ENCODE measurements at regions of chr2 and their contacts with region 1.

Region 1: GRCh38 chr2:136212423-136213378 is 94.8 kb upstream of the CXCR4 start:
- DNase-seq: peak in 2 of 3 donors; percentile 41 to 42
- H3K4me3 ChIP-seq: no peak overlapping the region
- H3K4me3 Mint-ChIP-seq: no peak overlapping the region
- H3K27ac ChIP-seq: peak overlapping the region in 1 of 2 donors; percentile 96
- H3K27ac Mint-ChIP-seq: peak overlapping the region; percentile 93 to 99 (median 97)
- H3K4me1 ChIP-seq: peaks cover 72 to 91% of the 10 kb centered on the region in 2 donors
- H3K4me1 Mint-ChIP-seq: peaks cover 94% of the 10 kb centered on the region
- H3K27me3 ChIP-seq: no peaks in the 10 kb centered on the region
- H3K27me3 Mint-ChIP-seq: peaks cover 0 to 1% (median 0%) of the 10 kb centered on the region in 3 donors
- CTCF ChIP-seq: no peak

Region 2: DNA sequence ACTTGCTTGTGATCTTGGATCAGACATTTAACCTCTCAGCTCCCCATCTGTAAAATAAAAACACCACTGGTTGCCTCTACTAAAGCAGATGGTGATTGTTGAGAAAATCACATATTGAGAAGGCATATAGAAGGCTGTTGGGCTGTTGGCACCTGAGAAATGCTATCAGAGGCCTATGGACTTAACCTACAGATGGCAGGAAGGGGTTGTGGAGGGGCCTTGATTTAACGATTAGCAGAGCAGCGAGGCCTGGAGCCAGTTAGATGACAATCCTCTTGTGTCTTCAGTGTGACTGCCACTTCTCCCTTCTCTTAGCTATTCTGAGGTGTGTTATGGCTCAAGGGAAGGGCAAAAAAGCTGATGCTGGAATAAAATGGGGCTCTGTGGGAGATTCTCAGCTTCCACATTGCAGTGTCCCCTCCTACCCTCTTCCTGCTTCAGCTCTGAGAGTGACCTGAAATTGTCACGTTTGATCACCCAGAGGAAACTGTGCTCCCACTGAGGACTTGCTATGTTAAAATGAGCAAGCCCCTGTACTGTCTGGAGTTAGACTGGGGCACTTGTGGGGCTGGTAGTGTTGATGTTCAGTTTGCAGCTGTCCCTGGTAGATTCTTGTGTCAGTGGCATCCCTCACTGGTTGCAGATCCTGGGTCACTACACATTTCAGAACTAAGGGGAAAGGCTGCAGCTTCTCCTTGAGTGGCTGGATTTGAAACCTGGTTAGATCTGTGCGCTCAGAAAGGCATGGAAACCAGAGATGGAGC is 126.3 kb before region 1 on chr2:
- intact Hi-C with region 1: no loop called
- DNase-seq: no peak
- H3K4me3 ChIP-seq: no peak overlapping the region
- H3K4me3 Mint-ChIP-seq: no peak overlapping the region
- H3K27ac ChIP-seq: no peak overlapping the region
- H3K27ac Mint-ChIP-seq: no peak overlapping the region
- H3K4me1 ChIP-seq: no peaks in the 10 kb centered on the region
- H3K4me1 Mint-ChIP-seq: peaks cover 8% of the 10 kb centered on the region
- H3K27me3 ChIP-seq: no peaks in the 10 kb centered on the region
- H3K27me3 Mint-ChIP-seq: peaks cover 0 to 5% (median 3%) of the 10 kb centered on the region in 3 donors
- CTCF ChIP-seq: no peak

Region 3: DNA sequence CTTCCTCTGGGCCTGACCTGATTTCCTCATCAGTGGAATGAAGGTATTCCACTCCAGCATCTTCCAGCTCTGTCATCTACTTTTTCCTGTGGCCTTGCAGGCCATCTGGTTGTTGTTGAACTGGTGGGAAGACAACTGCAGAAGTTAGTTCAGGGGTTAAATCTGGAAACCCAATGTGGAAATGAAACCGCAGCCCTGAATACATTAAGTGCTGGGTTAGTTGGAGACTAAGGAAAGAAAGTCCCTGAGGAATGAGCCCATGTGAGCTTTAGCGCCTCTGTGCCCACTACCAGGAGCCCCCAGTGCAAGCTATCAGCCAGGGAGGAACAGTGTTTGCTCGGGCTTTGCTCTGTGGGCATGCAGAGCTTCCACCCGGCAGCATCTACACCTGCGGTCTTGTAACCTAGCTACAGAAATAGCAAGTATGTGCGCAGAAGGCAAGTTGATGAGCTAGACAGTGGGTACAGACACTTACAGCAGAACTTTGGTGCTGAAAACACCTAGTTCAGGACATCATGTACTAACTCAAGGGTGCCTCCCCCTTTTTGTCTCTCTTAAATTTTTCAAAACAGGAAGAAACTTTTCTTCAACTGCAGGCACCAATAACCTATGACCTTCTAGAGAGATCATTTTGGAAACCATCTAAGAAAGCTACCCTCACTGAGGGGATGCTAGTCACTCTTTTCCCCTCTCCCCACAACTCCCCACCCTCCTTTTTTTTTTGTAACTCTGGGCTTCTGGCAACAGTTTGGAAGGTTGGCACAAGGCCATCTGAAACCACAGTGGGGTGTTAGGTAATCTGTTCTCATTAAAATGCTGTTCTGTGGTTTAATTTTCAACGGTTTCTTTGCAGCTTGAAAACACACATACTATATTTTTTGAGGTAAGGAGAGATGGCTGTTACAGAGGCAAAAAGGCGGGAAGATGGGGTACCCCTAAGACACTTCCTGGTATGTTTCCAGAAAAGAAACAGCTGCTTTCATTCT is 76.5 kb before region 1 on chr2:
- intact Hi-C with region 1: loop called in 1 of 2 experiments (anchors 5 kb)
- DNase-seq: peak; percentile 30 to 53 (median 34)
- H3K4me3 ChIP-seq: peak overlapping the region in 2 of 3 experiments; percentile 6 to 66
- H3K4me3 Mint-ChIP-seq: peak overlapping the region; percentile 57 to 68
- H3K27ac ChIP-seq: peak overlapping the region; percentile 52 to 92
- H3K27ac Mint-ChIP-seq: peak overlapping the region; percentile 86 to 94 (median 89)
- H3K4me1 ChIP-seq: peaks cover 80 to 86% of the 10 kb centered on the region in 2 donors
- H3K4me1 Mint-ChIP-seq: peaks cover 96% of the 10 kb centered on the region
- H3K27me3 ChIP-seq: no peaks in the 10 kb centered on the region
- H3K27me3 Mint-ChIP-seq: peaks cover 0 to 2% (median 0%) of the 10 kb centered on the region in 3 donors
- CTCF ChIP-seq: no peak

Region 4: GRCh38 chr2:136238286-136239078 is 25.8 kb after region 1 on chr2:
- intact Hi-C with region 1: loop called in 1 of 2 experiments (anchors 2 kb)
- DNase-seq: peak; percentile 93 to 98 (median 97)
- H3K4me3 ChIP-seq: no peak overlapping the region
- H3K4me3 Mint-ChIP-seq: peak overlapping the region in 1 of 2 donors; percentile 63
- H3K27ac ChIP-seq: peak overlapping the region; percentile 98 to 99
- H3K27ac Mint-ChIP-seq: peak overlapping the region; percentile 98 to 100 (median 99)
- H3K4me1 ChIP-seq: peaks cover 29 to 30% of the 10 kb centered on the region in 2 donors
- H3K4me1 Mint-ChIP-seq: peaks cover 55% of the 10 kb centered on the region
- H3K27me3 ChIP-seq: no peaks in the 10 kb centered on the region
- H3K27me3 Mint-ChIP-seq: peaks cover 0 to 9% (median 5%) of the 10 kb centered on the region in 3 donors
- CTCF ChIP-seq: no peak

Region 5: DNA sequence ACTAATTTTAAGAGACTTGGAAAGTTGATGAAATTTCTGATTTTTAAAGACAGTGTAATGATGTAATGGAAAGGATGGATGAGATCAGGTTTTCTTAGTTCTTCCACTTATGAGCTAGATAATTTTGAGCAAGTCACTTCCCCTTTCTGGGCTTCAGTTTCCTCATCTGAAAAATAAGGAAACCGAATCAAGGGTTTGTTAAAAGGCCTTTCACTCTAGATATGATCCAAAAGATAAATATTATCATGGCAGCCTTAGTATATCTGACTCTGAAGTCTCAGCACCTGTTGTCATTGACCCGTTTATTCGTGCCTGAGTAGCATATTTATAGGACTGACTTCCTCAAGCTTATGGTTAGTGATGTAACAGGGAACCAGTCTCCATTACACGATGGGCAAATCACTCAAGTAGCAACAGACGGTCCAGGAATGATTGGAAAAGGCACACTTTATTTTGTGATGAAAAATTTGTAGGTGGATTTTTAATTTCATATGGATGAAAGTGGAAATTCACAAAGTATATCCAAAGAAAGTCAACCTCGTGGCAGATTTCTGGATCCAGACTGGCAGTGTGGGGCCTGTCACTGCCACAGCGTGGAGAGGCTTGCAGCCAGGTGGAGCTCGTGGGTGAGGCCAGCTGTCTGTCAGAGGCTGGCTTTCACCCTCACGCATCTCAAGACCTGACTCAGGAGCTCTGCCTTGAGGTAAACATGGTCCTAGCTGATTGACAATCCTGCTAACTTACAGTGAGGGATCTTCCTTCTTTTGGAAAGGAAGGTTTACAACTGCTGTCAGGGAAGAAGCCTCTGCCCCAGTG is 43.2 kb after region 1 on chr2:
- intact Hi-C with region 1: loop called in 1 of 2 experiments (anchors 5 kb)
- DNase-seq: peak; percentile 87 to 95 (median 91)
- H3K4me3 ChIP-seq: no peak overlapping the region
- H3K4me3 Mint-ChIP-seq: no peak overlapping the region
- H3K27ac ChIP-seq: peak overlapping the region; percentile 88 to 91
- H3K27ac Mint-ChIP-seq: peak overlapping the region; percentile 94 to 96 (median 95)
- H3K4me1 ChIP-seq: peaks cover 37 to 39% of the 10 kb centered on the region in 2 donors
- H3K4me1 Mint-ChIP-seq: peaks cover 57% of the 10 kb centered on the region
- H3K27me3 ChIP-seq: no peaks in the 10 kb centered on the region
- H3K27me3 Mint-ChIP-seq: peaks cover 0 to 13% (median 0%) of the 10 kb centered on the region in 3 donors
- CTCF ChIP-seq: no peak

Measured in CD14-positive monocyte (primary cell).